SK-N-SH (cell line): ENCODE measurements at regions of chr17 and their contacts with region 1.

Region 1: DNA sequence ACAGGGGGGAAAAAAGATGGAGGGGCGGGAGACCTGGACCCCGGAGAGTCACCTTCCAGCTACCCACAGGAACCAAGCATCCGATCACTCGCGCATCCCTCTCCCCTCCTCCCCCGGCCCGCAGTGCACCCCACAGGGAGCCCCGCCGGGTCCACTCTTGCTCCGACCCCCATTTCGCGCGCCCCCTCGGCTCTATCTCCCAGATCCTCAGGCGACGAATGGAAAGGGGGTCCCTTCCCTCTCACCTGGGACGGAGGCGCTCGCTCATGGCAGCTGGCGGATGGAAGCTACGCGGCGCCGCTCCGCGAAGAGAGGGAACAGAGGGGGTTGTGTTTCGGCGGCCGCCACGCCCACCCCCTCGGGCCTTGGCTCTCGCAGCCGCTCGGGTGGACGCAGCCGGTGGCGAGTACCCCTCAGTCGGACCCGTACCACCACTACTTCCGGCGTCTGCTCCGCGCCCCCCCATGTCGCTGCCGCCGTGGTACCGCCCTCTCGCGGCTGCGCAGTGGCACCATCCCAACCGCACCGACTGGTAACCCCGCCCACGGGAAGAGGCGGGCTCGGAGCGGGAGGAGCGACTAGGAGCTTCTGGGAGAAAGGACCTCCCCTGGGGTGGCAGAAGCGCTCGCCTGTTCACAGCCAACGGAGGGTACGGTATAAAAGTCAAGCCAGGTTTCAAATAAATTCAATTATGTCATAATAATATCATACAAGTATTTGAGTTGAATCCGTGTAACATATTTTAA is 29.7 kb downstream of the CPSF4L start:
- DNase-seq: peak; percentile 100
- H3K4me3 ChIP-seq: peak overlapping the region; percentile 97 to 98
- H3K27ac ChIP-seq: peak overlapping the region; percentile 59 to 87
- H3K4me1 ChIP-seq: peaks cover 24 to 29% of the 10 kb centered on the region in 2 experiments
- H3K27me3 ChIP-seq: no peaks in the 10 kb centered on the region
- CTCF ChIP-seq: peak; percentile 10; the same call in 1 of the 2 replicates
- EP300 ChIP-seq: peak in 1 of 2 experiments; percentile 47; a peak in 2 of 4 replicates
- RAD21 ChIP-seq: 0 out of 2 replicates have a peak, but pooled peaks have one; percentile 24

Region 2: DNA sequence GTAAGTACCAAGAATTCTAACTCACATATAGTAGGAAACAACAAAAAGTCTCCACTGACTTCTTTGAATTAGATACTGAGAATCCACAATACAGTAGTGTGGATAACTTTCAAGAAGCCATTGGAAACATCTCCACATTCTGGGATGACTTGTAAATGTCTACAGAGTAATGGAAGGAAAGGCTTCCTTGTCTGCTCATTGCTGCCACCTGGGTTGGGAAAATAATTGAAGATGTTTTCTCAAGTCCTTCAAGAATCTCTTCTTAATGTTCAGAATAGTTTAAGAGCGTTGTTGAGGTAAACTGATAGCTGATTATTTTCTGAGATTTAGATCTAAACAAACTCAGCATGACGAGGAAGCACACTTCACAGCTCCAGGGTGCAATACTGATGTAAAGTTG is 15.7 kb after region 1 on chr17:
- CTCF ChIA-PET with region 1: interaction called, 17 read pairs
- POLR2A ChIA-PET with region 1: interaction called, 7 read pairs
- DNase-seq: no peak
- H3K4me3 ChIP-seq: no peak overlapping the region
- H3K27ac ChIP-seq: no peak overlapping the region
- H3K4me1 ChIP-seq: no peaks in the 10 kb centered on the region
- H3K27me3 ChIP-seq: no peaks in the 10 kb centered on the region
- CTCF ChIP-seq: peak; percentile 41
- EP300 ChIP-seq: no peak
- RAD21 ChIP-seq: no peak